B cell (primary cell): ENCODE measurements at regions of chr16 and their contacts with region 1.

Region 1: DNA sequence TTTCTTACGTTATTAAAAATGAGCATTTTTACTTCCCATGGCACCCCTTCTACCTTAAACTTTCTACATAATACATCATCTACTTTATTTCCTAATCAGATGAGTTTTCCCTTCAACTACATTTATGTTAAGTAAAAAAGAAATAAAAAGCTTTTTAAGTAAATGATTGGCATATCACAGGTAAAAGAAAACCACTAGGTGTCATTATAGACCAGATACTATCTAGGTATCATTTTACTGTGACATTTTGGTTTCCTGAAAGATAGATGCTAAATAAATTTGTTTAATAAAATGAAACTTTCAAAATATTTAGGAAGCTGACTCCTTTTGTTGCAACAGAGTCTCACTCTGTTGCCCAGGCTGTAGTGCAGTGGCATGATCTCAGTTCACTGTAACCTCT is 3.8 kb upstream of the CMTM1 start:
- DNase-seq: no peak
- ATAC-seq: no peak
- H3K4me3 ChIP-seq: no peak overlapping the region
- H3K4me3 Mint-ChIP-seq: no peak overlapping the region
- H3K27ac ChIP-seq: no peak overlapping the region
- H3K27ac Mint-ChIP-seq: no peak overlapping the region
- H3K4me1 ChIP-seq: no peaks in the 10 kb centered on the region
- H3K4me1 Mint-ChIP-seq: peaks cover 22% of the 10 kb centered on the region
- H3K27me3 ChIP-seq: no peaks in the 10 kb centered on the region
- H3K27me3 Mint-ChIP-seq: no peaks in the 10 kb centered on the region
- CTCF ChIP-seq: peak; percentile 48

Region 2: DNA sequence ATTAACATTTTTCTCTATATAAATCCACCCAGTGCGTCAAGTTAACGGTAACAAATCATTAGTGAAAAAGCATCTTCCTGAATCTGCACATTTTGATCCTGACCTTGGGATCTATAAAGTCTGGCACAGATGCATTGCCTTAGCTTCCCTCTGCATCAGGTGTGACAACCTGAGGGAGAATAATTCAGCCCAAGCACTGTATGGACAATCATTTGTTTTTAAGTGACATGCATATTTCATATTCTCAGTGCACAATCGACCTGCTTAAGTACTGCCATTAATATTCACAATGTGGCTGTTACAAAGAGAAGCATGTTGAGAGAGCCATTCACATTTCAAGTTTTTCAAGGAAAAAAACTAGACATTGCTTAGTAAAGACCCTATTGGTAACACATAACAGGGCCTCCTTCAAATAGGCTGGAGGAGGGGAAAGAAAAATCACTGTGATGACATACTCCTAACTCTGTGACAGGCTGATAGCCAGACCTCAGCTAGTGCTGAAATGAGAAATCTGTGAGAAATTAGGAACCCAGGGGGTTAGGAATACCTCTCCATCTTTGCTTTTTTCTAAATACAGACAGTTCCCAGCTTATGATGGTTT is 701.2 kb before region 1 on chr16:
- CTCF ChIA-PET with region 1: no interaction called
- POLR2A ChIA-PET with region 1: no interaction called
- intact Hi-C with region 1: no loop called
- DNase-seq: no peak
- ATAC-seq: no peak
- H3K4me3 ChIP-seq: no peak overlapping the region
- H3K4me3 Mint-ChIP-seq: no peak overlapping the region
- H3K27ac ChIP-seq: no peak overlapping the region
- H3K27ac Mint-ChIP-seq: no peak overlapping the region
- H3K4me1 ChIP-seq: no peaks in the 10 kb centered on the region
- H3K4me1 Mint-ChIP-seq: no peaks in the 10 kb centered on the region
- H3K27me3 ChIP-seq: no peaks in the 10 kb centered on the region
- H3K27me3 Mint-ChIP-seq: no peaks in the 10 kb centered on the region
- CTCF ChIP-seq: no peak

Region 3: GRCh38 chr16:66511615-66512500 is 50.5 kb before region 1 on chr16:
- CTCF ChIA-PET with region 1: interaction called, 16 read pairs
- POLR2A ChIA-PET with region 1: interaction called, 5 read pairs
- intact Hi-C with region 1: no loop called
- DNase-seq: peak; percentile 34
- ATAC-seq: no peak
- H3K4me3 ChIP-seq: no peak overlapping the region
- H3K4me3 Mint-ChIP-seq: no peak overlapping the region
- H3K27ac ChIP-seq: no peak overlapping the region
- H3K27ac Mint-ChIP-seq: peak overlapping the region; percentile 16
- H3K4me1 ChIP-seq: peaks cover 15 to 29% of the 10 kb centered on the region in 2 donors
- H3K4me1 Mint-ChIP-seq: peaks cover 41% of the 10 kb centered on the region
- H3K27me3 ChIP-seq: peaks cover 0 to 3% (median 0%) of the 10 kb centered on the region in 4 experiments
- H3K27me3 Mint-ChIP-seq: peaks cover 3% of the 10 kb centered on the region
- CTCF ChIP-seq: no peak

Region 4: DNA sequence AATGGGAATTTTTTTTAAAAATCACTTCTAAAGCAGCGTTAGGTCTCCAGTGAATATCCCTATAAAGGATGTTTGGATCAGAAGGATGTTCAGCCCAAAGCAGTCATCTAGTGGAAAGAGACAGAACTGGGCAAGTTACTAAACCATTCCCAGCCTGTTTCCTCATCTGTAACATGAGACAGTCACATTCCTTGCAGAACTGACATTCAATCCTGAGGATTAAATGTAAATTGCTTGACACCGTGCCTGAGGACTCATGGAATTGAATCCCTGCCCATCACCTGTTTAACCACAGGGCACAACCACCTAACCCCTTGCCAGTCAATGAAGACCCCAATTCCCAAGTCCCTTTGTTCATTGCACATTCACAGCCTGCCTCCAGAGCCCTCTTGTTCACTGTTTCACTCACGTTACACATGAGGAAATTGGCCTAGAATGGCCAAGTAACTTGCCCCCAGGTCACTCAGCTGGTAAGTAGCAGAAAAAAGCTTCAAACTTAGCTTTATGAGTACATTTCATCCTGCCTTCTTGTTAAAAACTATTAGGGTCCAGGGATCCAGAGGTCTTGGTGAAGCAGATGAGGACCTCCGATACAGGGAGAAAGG is 18.3 kb after region 1 on chr16:
- CTCF ChIA-PET with region 1: interaction called, 20 read pairs
- POLR2A ChIA-PET with region 1: no interaction called
- intact Hi-C with region 1: no loop called
- DNase-seq: no peak
- ATAC-seq: no peak
- H3K4me3 ChIP-seq: no peak overlapping the region
- H3K4me3 Mint-ChIP-seq: no peak overlapping the region
- H3K27ac ChIP-seq: no peak overlapping the region
- H3K27ac Mint-ChIP-seq: no peak overlapping the region
- H3K4me1 ChIP-seq: peaks cover 17 to 22% of the 10 kb centered on the region in 2 donors
- H3K4me1 Mint-ChIP-seq: peaks cover 18% of the 10 kb centered on the region
- H3K27me3 ChIP-seq: peaks cover 0 to 39% (median 31%) of the 10 kb centered on the region in 4 experiments
- H3K27me3 Mint-ChIP-seq: peaks cover 48% of the 10 kb centered on the region
- CTCF ChIP-seq: no peak

Region 5: DNA sequence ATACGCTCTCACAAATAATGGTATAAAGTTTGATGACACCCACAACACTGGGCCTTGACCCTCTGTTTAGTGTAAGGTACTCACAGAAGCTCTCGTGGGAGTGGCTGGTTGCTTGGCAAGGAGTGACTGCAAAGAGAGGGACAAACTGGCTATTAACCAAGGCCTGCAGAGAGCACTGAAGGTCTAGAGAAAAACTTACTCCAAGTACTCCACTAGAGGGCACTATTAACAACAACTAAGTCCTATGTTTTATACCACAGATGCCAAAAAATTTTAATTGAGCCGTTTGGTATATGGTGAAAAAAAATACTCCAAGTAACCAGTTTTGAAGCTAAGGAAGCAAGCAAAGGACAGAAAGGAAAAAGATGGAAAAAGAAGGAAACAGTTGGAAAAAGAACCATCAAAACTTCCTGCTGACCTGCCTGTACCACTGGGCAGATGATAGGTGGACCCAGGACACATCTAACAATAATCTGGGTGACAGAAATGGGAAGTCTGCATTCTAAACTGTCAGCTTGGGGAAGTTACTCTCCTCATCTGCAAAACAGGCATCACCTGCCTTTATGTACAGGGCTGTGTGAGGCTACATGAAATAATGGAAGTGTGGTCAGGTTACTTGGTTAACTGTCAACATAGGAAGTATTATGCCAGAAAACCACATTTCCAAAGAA is 165.8 kb after region 1 on chr16:
- CTCF ChIA-PET with region 1: interaction called, 11 read pairs
- POLR2A ChIA-PET with region 1: no interaction called
- intact Hi-C with region 1: no loop called
- DNase-seq: peak; percentile 60
- ATAC-seq: peak; percentile 57
- H3K4me3 ChIP-seq: no peak overlapping the region
- H3K4me3 Mint-ChIP-seq: no peak overlapping the region
- H3K27ac ChIP-seq: no peak overlapping the region
- H3K27ac Mint-ChIP-seq: no peak overlapping the region
- H3K4me1 ChIP-seq: no peaks in the 10 kb centered on the region
- H3K4me1 Mint-ChIP-seq: peaks cover 3% of the 10 kb centered on the region
- H3K27me3 ChIP-seq: no peaks in the 10 kb centered on the region
- H3K27me3 Mint-ChIP-seq: no peaks in the 10 kb centered on the region
- CTCF ChIP-seq: peak; percentile 83